Right ventricle myocardium inferior (tissue), 1 donor: ENCODE measurements at regions of chr3 and their contacts with region 1.

Region 1: DNA sequence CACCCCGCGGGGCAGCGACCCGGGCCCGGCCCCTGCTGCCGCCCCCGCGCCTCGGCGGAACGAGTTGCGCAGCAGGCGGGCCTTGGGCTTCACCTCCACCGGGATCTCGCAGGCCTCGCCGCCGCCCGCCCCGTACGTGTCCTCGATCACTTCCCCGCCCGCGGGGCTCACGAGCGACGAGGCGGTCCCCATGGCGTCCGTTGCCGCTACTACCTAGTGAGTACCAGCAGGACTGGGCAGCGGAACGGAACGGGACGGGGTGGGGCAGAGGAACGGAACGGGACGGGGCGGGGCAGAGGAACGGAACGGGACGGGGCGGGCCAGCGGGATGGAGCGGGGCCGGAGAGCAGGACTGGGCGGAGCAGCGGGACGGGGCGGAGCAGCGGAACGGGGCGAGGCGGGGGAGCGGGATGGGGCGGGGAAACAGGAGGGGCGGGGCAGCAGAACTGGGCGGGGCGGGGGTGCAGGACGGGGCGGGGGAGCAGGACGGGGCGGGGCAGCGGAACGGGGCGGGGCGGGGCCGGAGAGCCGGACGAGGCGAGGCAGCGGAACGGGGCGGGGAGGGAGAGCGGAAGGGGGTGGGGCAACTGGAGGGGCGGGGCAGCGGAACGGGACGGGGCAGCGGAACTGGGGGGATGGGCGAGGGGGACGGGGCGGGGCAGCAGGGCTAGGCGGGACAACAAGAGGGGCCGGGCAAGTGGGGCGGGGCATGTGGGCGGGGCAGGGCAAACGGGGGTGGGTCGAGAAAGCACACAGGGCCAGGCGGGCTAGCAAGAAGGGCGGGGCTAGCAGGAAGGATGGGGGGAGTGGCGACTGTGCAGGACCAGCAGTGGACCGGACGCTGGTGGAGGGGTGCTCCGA is at the start of gene NPHP3:
- DNase-seq: peak; percentile 98
- ATAC-seq: peak; percentile 94
- total RNA-seq, gene NPHP3: 8.1 TPM

Region 2: DNA sequence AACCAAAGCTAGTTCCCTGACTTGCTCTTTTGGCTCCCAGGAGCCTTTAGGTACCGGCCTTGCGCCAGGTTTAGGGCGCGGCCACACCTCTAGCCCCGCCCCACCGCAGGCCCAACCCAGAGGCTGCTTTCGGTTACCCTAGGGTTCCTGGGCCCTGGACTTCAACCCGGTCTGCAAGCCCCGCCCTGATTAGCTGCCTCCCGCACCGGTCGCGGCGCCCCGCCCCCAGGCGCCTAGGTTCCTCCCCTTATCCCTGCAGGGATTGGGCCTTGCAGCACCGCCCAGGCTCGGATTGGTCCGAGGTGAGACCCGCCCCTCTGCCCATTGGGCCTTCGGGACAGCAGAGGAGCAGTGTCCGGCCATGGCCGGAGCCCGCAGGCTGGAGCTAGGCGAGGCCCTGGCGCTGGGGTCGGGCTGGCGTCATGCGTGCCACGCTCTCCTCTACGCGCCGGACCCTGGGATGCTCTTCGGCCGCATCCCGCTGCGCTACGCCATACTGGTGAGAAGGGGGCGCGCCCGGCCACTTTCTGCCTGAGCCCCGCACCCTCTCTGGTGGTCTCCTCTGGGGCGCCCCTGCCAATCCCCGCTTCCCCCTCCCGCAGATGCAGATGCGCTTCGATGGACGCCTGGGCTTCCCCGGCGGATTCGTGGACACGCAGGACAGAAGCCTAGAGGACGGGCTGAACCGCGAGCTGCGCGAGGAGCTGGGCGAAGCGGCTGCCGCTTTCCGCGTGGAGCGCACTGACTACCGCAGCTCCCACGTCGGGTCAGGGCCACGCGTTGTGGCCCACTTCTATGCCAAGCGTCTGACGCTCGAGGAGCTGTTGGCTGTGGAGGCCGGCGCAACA is 1340.7 kb before region 1 on chr3 and contains the start of gene NUDT16:
- intact Hi-C with region 1: loop called (anchors 10 kb)
- DNase-seq: peak; percentile 100
- ATAC-seq: peak; percentile 99
- total RNA-seq, gene NUDT16: 23.3 TPM

Region 3: GRCh38 chr3:131701153-131701770 is 1021.1 kb before region 1 on chr3:
- intact Hi-C with region 1: no loop called
- DNase-seq: no peak
- ATAC-seq: no peak

Region 4: DNA sequence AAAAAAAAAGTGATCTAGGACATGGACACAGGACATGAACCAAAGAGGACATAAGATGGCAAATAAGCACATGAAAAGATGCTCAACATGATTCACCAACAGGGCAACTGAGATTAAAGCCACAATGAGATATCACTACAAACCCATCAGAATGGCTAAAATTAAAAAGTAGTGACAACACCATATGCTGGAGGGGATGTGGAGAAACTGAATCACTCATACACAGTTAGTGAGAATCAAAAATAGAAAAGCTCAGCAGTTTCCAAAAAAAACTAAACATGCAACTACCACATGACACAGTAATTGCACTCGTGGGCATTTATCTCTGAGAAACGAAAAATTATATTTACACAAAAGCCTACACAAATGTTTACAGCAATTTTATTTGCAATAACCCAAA is 153.2 kb before region 1 on chr3:
- intact Hi-C with region 1: no loop called
- DNase-seq: no peak
- ATAC-seq: no peak

Region 5: GRCh38 chr3:132659365-132660051 is 62.9 kb before region 1 on chr3 and contains the start of gene ACAD11:
- intact Hi-C with region 1: loop called (anchors 2 kb)
- DNase-seq: peak; percentile 85
- ATAC-seq: peak; percentile 88
- total RNA-seq, gene ACAD11: 14.5 TPM

Region 6: GRCh38 chr3:133040696-133041523 is 318.5 kb after region 1 on chr3:
- intact Hi-C with region 1: loop called (anchors 5 kb)
- DNase-seq: peak; percentile 53
- ATAC-seq: peak; percentile 90

Region 7: GRCh38 chr3:133573054-133573628 is 850.7 kb after region 1 on chr3:
- intact Hi-C with region 1: loop called (anchors 2 kb)
- DNase-seq: peak; percentile 100
- ATAC-seq: peak; percentile 97

Region 8: GRCh38 chr3:133805527-133806475 is 1083.4 kb after region 1 on chr3 and contains the start of gene SRPRB:
- intact Hi-C with region 1: loop called (anchors 10 kb)
- DNase-seq: peak; percentile 97
- ATAC-seq: peak; percentile 100
- total RNA-seq, gene SRPRB: 27.2 TPM